T-cell (primary cell): ENCODE measurements at regions of chr17 and their contacts with region 1.

Region 1: GRCh38 chr17:47733047-47733673 is at the start of gene TBX21:
- DNase-seq: peak; percentile 72 to 94 (median 86)
- ATAC-seq: peak; percentile 91 to 93 (median 92)
- H3K4me3 ChIP-seq: peak within 1 kb of the TSS; percentile 76 to 89
- H3K4me3 Mint-ChIP-seq: peak within 1 kb of the TSS; percentile 87 to 99 (median 98)
- H3K27ac ChIP-seq: peak within 1 kb of the TSS; percentile 68
- H3K27ac Mint-ChIP-seq: peak within 1 kb of the TSS; percentile 96 to 98
- H3K4me1 ChIP-seq: peaks cover 5 to 70% of the 10 kb centered on the region in 2 experiments
- H3K4me1 Mint-ChIP-seq: peaks cover 30 to 66% (median 41%) of the 10 kb centered on the region in 3 donors
- H3K27me3 ChIP-seq: peaks cover 3 to 11% of the 10 kb centered on the region in 2 experiments
- H3K27me3 Mint-ChIP-seq: peaks cover 4 to 10% of the 10 kb centered on the region in 2 donors
- total RNA-seq, gene TBX21: 7.9 to 37.3 (median 20.8) TPM

Region 2: DNA sequence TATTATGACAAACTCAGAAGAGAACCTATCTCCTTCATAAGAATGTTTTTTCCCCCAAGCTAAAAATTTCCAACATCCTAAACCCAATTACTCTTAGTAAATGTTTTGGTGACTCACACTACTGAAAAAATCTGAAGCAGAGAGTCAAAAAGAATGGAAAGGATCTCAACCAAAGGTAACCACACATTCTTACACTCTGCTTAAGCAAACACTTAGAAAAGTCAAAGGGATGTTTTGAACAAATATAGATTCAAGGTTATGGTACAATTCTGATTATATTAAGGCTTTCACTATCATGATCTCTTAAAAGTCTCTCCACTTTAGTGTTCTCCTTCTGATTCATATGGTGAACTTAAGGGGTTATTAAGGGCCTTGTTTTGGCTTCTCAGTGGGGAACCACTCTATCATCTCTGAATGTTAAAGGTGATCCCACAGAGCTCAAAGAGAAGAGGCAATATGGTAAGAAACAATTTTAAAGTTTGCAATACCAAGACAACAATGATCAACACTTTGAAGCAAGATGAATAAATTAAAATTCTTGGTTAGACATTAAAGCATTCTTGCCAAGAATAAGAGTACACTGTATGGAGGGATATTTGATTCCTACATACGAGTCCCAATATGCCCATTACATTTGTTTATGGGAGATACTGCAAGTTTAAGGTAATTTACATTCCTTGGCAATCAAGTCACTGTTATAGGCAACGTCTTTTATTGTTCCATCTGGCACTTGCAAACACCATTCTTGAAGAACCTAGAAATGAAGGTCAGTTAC is 613.2 kb before region 1 on chr17:
- CTCF ChIA-PET with region 1: no interaction called
- POLR2A ChIA-PET with region 1: no interaction called
- DNase-seq: no peak
- ATAC-seq: no peak
- H3K4me3 ChIP-seq: no peak overlapping the region
- H3K4me3 Mint-ChIP-seq: no peak overlapping the region
- H3K27ac ChIP-seq: no peak overlapping the region
- H3K27ac Mint-ChIP-seq: peak overlapping the region in 1 of 2 donors; percentile 28
- H3K4me1 ChIP-seq: no peaks in the 10 kb centered on the region
- H3K4me1 Mint-ChIP-seq: no peaks in the 10 kb centered on the region
- H3K27me3 ChIP-seq: no peaks in the 10 kb centered on the region
- H3K27me3 Mint-ChIP-seq: no peaks in the 10 kb centered on the region

Region 3: DNA sequence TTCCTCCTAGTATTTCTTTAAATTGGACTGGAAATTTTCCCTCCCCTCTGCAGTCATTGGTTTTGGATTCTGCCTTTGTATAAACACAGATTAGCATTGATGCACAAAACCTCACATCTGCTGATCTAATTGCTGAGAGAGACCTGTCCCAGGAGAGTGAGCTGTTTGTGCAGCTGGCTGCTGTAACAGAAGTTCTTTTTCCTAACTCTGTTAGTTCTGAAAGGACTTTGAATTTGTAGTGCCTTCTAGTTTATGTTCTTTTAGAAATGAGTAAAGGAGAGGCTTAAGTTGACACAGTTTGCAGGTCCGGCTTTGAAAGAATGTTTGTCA is 128.6 kb before region 1 on chr17:
- CTCF ChIA-PET with region 1: no interaction called
- POLR2A ChIA-PET with region 1: no interaction called
- DNase-seq: no peak
- ATAC-seq: no peak
- H3K4me3 ChIP-seq: no peak overlapping the region
- H3K4me3 Mint-ChIP-seq: no peak overlapping the region
- H3K27ac ChIP-seq: no peak overlapping the region
- H3K27ac Mint-ChIP-seq: no peak overlapping the region
- H3K4me1 ChIP-seq: no peaks in the 10 kb centered on the region
- H3K4me1 Mint-ChIP-seq: no peaks in the 10 kb centered on the region
- H3K27me3 ChIP-seq: no peaks in the 10 kb centered on the region
- H3K27me3 Mint-ChIP-seq: no peaks in the 10 kb centered on the region

Region 4: DNA sequence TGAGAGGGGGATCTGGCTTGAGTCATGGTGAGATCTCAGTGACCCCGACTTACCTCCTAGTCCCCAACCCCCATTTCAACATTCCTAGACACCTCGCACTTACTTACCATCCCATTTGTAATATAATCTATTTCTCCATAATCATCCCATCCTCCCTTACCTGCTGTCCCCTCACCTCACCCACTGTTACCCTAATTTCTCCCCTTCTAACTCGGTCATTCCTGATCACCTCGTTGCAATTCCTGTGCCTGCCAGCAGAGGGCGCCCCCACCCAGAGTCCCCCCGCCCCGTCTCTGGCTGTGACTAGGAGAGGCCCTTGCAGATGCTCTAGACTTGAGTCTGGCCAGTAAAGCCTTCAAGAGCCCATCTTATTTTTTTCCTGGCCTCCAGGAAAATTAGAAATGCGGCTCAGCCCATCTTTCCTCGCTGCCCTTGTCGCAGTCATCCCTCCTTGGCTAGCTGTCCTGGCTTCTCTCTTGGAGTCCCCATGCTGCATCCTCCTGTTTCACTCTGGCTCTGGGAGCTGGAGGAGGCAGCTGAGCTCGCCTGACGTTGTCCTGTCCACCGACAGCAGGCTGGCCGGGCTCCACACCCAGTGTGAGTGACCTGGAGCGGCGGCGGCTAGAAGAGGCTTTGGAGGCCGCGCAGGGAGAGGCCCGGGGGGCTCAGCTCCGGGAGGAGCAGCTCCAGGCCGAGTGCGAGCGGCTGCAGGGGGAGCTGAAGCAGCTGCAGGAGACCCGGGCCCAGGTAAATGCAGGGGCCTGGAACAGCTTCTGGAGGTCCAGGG is 34.2 kb before region 1 on chr17:
- CTCF ChIA-PET with region 1: interaction called, 5 to 19 read pairs
- POLR2A ChIA-PET with region 1: no interaction called
- DNase-seq: peak; percentile 37 to 83 (median 72)
- ATAC-seq: peak; percentile 34 to 50 (median 41)
- H3K4me3 ChIP-seq: peak overlapping the region in 1 of 2 donors; percentile 6
- H3K4me3 Mint-ChIP-seq: no peak overlapping the region
- H3K27ac ChIP-seq: no peak overlapping the region
- H3K27ac Mint-ChIP-seq: peak overlapping the region; percentile 25 to 45
- H3K4me1 ChIP-seq: peaks cover 9 to 71% of the 10 kb centered on the region in 2 experiments
- H3K4me1 Mint-ChIP-seq: peaks cover 37 to 63% (median 41%) of the 10 kb centered on the region in 3 donors
- H3K27me3 ChIP-seq: no peaks in the 10 kb centered on the region
- H3K27me3 Mint-ChIP-seq: no peaks in the 10 kb centered on the region